Activated CD4-positive, alpha-beta T cell treated with anti-CD3 and anti-CD28 coated beads, Interleukin-2, amount 10 ng/mL, durations not matched to agents 24 days and 14 days (primary cell): ENCODE measurements at regions of chr1 and their contacts with region 1.

Region 1: DNA sequence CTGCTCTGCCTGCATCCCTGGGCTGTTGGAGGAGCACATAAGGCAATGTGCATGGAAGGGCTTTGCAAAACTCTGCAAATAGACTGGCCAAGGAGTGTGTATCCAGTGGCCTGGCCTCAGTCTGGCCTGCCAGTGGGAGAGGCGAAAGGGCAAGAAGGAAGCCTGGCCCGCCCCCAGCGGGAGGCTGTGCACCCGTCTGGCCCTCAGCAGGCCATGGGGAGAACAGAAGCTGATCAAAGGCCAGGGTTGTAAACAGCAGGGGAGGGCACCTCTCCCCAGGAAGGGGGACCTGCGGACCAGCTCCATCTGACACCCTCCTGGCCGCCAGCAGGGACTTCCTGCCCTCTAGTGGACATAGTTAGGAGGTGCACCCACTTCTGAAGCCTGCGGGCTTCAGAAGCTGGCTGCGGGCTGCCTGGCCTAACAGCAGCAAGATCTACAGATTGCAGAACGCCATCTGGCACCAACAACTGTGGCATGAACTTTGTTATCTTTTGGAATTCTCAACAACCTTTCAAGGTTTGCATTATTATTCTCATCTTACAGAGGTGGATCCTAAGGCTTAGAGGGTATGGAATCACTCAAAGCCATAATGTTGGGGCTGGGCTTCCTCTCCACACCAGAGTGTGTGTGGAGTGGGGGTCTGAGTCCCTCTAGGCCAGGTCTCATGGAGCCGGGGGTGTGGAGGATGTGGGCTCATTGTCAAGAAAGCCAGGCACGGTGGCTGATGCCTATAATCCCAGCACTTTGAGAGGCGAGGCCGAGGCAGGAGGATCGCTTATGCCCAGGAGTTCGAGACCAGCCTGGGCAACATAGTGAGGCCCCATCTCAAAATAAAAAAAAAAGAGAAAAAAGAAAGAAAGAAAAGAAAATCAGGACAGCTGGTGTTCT is 18.9 kb upstream of the CDK18 start:
- DNase-seq: peak; percentile 91
- H3K4me3 Mint-ChIP-seq: no peak overlapping the region
- H3K27ac Mint-ChIP-seq: no peak overlapping the region
- H3K4me1 Mint-ChIP-seq: peaks cover 13% of the 10 kb centered on the region
- H3K27me3 Mint-ChIP-seq: peaks cover 50% of the 10 kb centered on the region

Region 2: GRCh38 chr1:205335643-205336091 is 149.9 kb before region 1 on chr1:
- intact Hi-C with region 1: loop called (anchors 1 kb)
- DNase-seq: peak; percentile 93
- H3K4me3 Mint-ChIP-seq: no peak overlapping the region
- H3K27ac Mint-ChIP-seq: no peak overlapping the region
- H3K4me1 Mint-ChIP-seq: no peaks in the 10 kb centered on the region
- H3K27me3 Mint-ChIP-seq: peaks cover 38% of the 10 kb centered on the region

Region 3: DNA sequence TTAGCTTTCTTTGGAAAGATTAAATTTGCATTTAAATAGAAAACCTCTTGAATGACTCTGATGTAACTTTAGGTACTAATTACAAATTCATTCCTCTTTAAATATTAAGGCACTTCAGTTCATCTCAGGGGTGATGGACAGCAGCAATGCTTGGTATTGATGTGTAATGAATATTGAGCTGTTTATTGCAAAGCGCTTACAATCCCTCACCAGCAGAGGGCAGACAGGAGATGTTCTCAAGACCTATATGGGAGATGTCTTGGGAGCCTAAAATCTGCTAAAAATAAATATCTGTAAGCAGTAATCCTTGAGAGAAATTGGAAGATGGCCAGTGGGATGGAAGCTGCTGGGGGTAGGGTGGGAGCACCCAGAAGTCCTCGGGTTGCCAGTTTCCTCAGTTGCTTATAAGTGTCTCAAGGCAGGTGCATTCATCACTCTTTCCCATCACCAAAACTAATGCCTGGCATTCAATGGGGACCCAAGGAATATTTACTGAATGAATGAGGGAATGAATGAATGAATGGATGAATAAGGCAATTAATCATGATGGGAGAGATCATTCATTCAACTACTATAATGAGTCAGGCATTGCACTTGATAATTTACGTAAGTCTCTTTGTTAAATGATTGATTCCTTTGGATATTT is 131.2 kb before region 1 on chr1:
- intact Hi-C with region 1: loop called (anchors 1 kb)
- DNase-seq: peak; percentile 87
- H3K4me3 Mint-ChIP-seq: no peak overlapping the region
- H3K27ac Mint-ChIP-seq: no peak overlapping the region
- H3K4me1 Mint-ChIP-seq: no peaks in the 10 kb centered on the region
- H3K27me3 Mint-ChIP-seq: peaks cover 26% of the 10 kb centered on the region

Region 4: GRCh38 chr1:205396967-205397616 is 88.5 kb before region 1 on chr1:
- intact Hi-C with region 1: loop called (anchors 1 kb)
- DNase-seq: peak; percentile 71
- H3K4me3 Mint-ChIP-seq: no peak overlapping the region
- H3K27ac Mint-ChIP-seq: no peak overlapping the region
- H3K4me1 Mint-ChIP-seq: no peaks in the 10 kb centered on the region
- H3K27me3 Mint-ChIP-seq: peaks cover 30% of the 10 kb centered on the region

Region 5: DNA sequence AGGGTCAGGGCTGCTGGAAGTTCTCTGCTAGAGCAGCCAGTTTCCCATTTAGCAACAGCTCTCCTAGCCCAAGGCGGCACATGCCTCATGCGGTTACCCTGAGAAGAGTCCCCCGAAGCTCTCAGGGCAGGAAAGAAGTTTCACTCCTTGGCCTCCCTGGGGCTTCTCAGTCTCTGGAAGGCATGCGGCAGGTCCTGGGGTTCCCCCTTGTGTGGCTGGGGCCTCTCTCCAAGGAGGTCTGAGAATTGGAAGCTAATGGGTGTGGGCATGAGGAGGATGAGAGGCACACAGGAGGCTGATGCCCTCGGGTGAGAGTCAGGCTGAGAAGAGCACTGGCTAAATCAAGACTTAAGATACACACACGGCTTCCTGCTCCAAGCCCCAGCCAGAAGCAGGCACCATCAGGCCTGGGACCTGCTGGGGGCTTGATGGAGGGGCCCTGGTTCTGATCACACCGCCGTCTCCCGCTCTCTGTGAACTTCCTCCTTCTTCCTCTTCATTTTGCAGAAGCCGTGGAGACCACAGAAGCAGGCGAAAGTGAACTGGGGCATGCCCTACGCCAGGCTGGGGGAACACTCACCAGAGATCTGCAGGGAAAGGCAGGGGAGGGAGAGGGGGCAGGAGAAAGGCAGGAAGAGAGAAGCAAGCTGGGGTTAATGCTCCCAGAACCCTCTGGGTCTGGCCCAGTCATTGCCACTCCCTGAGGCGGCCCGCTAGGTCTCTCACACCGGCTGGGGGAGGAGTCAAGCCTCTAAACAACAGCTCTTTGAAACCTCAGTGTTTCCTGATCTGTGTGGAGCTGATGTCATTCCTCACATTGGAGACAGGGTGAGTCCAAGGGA is 44.9 kb before region 1 on chr1:
- intact Hi-C with region 1: loop called (anchors 5 kb)
- DNase-seq: peak; percentile 91
- H3K4me3 Mint-ChIP-seq: peak overlapping the region; percentile 82
- H3K27ac Mint-ChIP-seq: peak overlapping the region; percentile 91
- H3K4me1 Mint-ChIP-seq: peaks cover 22% of the 10 kb centered on the region
- H3K27me3 Mint-ChIP-seq: peaks cover 11% of the 10 kb centered on the region

Region 6: GRCh38 chr1:205523891-205524793 is 38.6 kb after region 1 on chr1:
- intact Hi-C with region 1: loop called (anchors 2 kb)
- DNase-seq: peak; percentile 90
- H3K4me3 Mint-ChIP-seq: no peak overlapping the region
- H3K27ac Mint-ChIP-seq: no peak overlapping the region
- H3K4me1 Mint-ChIP-seq: no peaks in the 10 kb centered on the region
- H3K27me3 Mint-ChIP-seq: no peaks in the 10 kb centered on the region

Region 7: GRCh38 chr1:205749234-205750137 is 263.9 kb after region 1 on chr1:
- intact Hi-C with region 1: no loop called
- DNase-seq: peak; percentile 98
- H3K4me3 Mint-ChIP-seq: peak overlapping the region; percentile 85
- H3K27ac Mint-ChIP-seq: peak overlapping the region; percentile 96
- H3K4me1 Mint-ChIP-seq: peaks cover 29% of the 10 kb centered on the region
- H3K27me3 Mint-ChIP-seq: peaks cover 2% of the 10 kb centered on the region